ENCODE measurements at regions of chr1 and their contacts with region 1.

Region 1: GRCh38 chr1:204503122-204503912 is 8.7 kb upstream of the PIK3C2B start:
- DNase-seq: no peak
- H3K4me3 ChIP-seq: no peak overlapping the region
- H3K27ac ChIP-seq: no peak overlapping the region
- H3K4me1 ChIP-seq: peaks cover 0 to 17% (median 5%) of the 10 kb centered on the region in 4 donors
- H3K27me3 ChIP-seq: no peaks in the 10 kb centered on the region
- CTCF ChIP-seq: peak; percentile 48 to 81 (median 73)
- EP300 ChIP-seq: no peak
- POLR2A ChIP-seq: no peak

Region 2: DNA sequence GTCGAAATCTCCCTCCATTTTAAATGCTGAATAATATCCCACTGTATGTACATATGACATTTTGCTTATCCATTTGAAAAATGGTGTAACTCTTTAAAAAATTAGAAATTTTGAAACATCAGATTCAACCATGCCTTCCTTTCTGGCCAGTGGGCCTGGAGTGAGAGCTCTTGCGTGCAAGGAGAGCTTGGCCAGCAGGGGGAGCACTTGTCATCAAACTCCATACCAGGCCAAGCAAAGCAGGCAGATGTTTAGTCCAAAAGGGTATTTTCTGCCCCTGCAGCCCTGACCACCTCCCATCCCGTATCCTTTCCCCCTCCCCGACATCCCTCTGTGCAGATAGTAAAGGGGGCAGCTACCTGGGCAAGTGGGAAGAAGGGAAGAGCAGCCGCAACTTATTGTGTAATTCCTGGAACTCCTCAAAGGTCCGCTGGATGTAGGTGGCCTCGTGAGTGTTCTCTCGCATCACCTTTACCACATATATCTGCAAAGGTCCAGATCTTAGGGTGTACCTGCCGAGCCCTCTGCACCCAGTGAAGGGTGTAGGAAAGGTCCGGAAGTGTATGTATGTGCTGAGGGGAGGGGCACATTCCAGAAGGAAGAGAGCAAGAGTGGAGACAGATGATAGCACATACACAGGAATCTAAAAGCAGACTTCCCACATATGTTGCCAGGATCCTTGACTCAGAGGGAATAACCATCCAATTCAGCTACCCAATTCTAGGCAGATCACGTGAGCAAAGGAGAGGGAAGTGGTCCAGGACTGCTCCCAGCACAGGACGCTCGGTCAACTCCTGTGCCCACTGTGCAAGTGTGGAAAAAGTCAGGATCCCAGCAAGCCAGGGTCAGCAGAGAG is 71.8 kb before region 1 on chr1:
- intact Hi-C with region 1: loop called (anchors 1 kb)
- DNase-seq: peak; percentile 91
- H3K4me3 ChIP-seq: no peak overlapping the region
- H3K27ac ChIP-seq: peak overlapping the region; percentile 44 to 91 (median 68)
- H3K4me1 ChIP-seq: peaks cover 0 to 39% (median 36%) of the 10 kb centered on the region in 4 donors
- H3K27me3 ChIP-seq: no peaks in the 10 kb centered on the region
- CTCF ChIP-seq: peak; percentile 78 to 97 (median 87)
- EP300 ChIP-seq: no peak
- POLR2A ChIP-seq: no peak

Region 3: GRCh38 chr1:204446370-204447111 is 56.8 kb before region 1 on chr1:
- intact Hi-C with region 1: loop called (anchors 1 kb)
- DNase-seq: peak; percentile 88
- H3K4me3 ChIP-seq: no peak overlapping the region
- H3K27ac ChIP-seq: peak overlapping the region; percentile 12 to 65 (median 56)
- H3K4me1 ChIP-seq: peaks cover 0 to 23% (median 19%) of the 10 kb centered on the region in 4 donors
- H3K27me3 ChIP-seq: no peaks in the 10 kb centered on the region
- CTCF ChIP-seq: peak; percentile 70 to 82 (median 75)
- EP300 ChIP-seq: no peak
- POLR2A ChIP-seq: no peak

Measured in sigmoid colon (tissue), 7 donors.